ENCODE measurements at regions of chr12 and their contacts with region 1.

Region 1: DNA sequence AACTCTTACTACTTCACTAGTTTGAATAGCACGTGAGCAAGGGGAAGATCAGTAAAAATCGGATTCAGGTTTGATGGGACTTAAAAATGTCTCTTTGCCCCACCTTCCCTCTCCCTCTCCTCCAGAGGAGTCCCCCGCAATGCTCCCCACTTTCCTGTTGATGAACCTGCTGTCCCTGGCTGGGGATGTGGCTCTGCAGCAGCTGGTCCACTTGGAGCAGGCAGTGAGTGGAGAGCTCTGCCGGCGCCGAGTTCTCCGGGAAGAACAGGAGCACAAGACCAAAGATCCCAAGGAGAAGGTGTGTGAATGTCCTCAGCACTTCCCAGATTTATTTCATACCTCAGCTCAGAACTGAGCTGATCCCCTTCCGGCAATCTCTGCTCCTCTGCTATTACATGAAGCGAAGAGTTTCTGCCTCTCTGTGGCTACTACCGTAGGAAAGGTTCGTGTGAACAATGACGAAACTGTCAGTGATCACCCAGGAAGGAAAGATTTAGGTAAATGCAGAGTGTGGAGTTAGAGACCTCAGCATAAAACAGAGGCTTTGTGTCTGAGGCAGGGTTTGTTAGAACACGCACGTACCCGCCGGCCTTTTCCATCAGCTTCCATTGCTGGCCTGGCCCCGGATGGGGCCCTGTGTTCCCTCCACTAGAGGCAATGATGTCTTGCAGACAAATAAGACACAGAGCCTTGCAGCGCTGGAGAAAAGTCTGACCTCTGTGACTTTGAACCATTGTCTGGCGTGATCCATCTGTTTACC is 7.4 kb upstream of the GAPDH start:
- DNase-seq: peak in 1 of 2 donors; percentile 56
- H3K4me3 ChIP-seq: no peak overlapping the region
- H3K27ac ChIP-seq: peak overlapping the region; percentile 26 to 65
- H3K4me1 ChIP-seq: peaks cover 0 to 5% of the 10 kb centered on the region in 2 donors
- H3K27me3 ChIP-seq: no peaks in the 10 kb centered on the region
- CTCF ChIP-seq: no peak
- POLR2A ChIP-seq: no peak

Region 2: DNA sequence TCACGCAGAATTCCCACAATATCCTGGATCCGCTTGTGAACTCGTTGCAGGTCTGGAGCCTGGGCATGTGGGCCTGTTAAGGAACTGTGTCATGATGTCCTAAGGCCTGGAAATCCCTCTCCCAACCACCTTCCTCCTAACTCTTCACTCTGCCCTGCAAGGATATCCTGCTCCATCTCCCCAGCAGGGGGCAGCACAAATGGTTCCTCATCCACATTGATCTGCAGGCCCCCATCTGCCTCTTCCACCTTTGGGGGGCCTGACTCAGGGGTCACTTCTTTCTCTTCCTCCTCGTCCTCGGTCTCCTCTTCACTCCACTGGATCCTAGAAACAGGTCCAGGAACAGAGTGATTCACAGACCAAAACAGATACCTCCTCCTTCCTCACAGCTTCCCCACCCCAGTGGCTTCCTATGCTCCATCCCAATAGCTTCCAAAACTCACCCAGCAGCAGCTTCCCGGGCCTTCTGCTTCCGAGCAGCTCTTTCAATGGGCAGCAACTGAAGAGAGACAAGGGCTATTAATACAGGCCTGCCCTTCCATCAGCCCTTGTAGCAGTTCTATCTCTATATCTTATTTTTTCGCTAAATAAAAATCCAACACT is 36.6 kb after region 1 on chr12:
- intact Hi-C with region 1: loop called (anchors 1 kb)
- DNase-seq: no peak
- H3K4me3 ChIP-seq: no peak overlapping the region
- H3K27ac ChIP-seq: no peak overlapping the region
- H3K4me1 ChIP-seq: no peaks in the 10 kb centered on the region
- H3K27me3 ChIP-seq: no peaks in the 10 kb centered on the region
- CTCF ChIP-seq: peak; percentile 32 to 55 (median 50)
- POLR2A ChIP-seq: no peak

Measured in breast epithelium (tissue), 4 donors.